ENCODE measurements at regions of chr9 and their contacts with region 1.

Region 1: DNA sequence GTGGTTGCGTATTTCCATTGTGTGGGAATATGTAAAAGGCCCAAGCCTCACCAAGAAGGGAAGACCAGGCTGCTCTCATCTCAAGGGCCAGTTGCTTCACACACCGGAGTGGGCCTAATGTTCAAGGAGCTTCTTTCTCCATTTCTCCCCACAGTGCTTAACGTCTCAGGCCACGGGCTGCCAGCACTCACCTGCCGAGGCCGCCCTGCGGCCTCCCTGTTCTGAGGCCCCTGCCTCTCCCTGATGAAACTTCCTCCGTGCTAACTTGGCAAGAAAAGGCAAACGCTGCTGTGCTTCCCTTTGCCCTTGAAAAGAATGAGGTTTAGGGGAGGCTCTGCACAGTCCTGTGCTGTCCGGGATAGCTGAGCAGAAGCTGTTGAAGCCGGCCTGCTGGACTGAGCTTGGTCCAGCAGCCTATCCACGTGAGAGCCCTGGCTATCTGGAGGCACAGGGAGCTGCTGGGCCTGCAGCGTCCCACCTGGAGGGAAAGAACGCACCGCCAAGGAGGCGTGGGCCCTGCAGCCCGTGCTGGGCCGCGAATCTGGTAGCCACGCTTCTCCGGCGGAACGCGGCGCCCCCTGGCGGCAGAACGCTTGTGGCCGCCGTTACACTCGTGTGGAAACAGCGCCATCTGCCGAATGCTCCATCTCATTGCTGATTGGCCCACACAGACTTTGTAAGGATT is 73.5 kb upstream of the PRSS3 start:
- DNase-seq: peak; percentile 80 to 92 (median 88)
- H3K4me3 ChIP-seq: no peak overlapping the region
- H3K27ac ChIP-seq: no peak overlapping the region
- H3K4me1 ChIP-seq: peaks cover 0 to 15% (median 11%) of the 10 kb centered on the region in 4 experiments
- H3K27me3 ChIP-seq: no peaks in the 10 kb centered on the region

Region 2: GRCh38 chr9:33628865-33629410 is 92.9 kb before region 1 on chr9:
- CTCF ChIA-PET with region 1: interaction called, 350 read pairs
- POLR2A ChIA-PET with region 1: interaction called, 5 read pairs
- DNase-seq: peak in 1 of 3 donors; percentile 16
- H3K4me3 ChIP-seq: peak overlapping the region in 2 of 7 experiments; percentile 43 to 45
- H3K27ac ChIP-seq: no peak overlapping the region
- H3K4me1 ChIP-seq: peaks cover 0 to 7% (median 4%) of the 10 kb centered on the region in 4 experiments
- H3K27me3 ChIP-seq: no peaks in the 10 kb centered on the region

Region 3: GRCh38 chr9:33638391-33638915 is 83.4 kb before region 1 on chr9:
- CTCF ChIA-PET with region 1: interaction called, 16 read pairs
- POLR2A ChIA-PET with region 1: no interaction called
- DNase-seq: peak; percentile 18 to 78 (median 63)
- H3K4me3 ChIP-seq: peak overlapping the region in 6 of 7 experiments; percentile 9 to 77 (median 58)
- H3K27ac ChIP-seq: no peak overlapping the region
- H3K4me1 ChIP-seq: peaks cover 4 to 17% (median 14%) of the 10 kb centered on the region in 4 experiments
- H3K27me3 ChIP-seq: no peaks in the 10 kb centered on the region

Region 4: DNA sequence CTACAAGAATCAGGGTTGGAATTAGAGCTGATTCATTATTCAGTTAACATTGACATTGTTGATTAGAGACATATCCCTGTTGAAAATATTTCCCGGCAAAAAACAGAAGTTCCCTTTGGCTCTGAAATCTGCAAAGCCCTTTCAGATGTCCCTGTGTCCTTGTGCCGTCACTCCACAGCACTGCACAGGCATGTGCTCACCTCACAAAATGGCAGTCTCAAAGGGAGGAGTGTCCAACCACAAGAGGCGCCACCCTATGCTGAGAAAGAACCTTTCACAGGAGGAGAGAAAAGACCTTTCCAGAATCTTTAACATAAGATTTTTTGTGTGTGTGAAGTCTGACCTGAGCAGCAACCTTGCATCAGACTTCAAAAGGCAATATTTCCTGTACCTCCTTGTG is 39.3 kb before region 1 on chr9:
- CTCF ChIA-PET with region 1: interaction called, 13 read pairs
- POLR2A ChIA-PET with region 1: no interaction called
- DNase-seq: no peak
- H3K4me3 ChIP-seq: no peak overlapping the region
- H3K27ac ChIP-seq: no peak overlapping the region
- H3K4me1 ChIP-seq: peaks cover 0 to 14% (median 10%) of the 10 kb centered on the region in 4 experiments
- H3K27me3 ChIP-seq: no peaks in the 10 kb centered on the region